Activated T-helper 1 cell treated with anti-CD3 and anti-CD28 coated beads, Interleukin-12 subunit alpha, Interleukin-12 subunit beta, Interleukin-2, Interleukin-4 antibody, amounts not matched to agents 30 ng/mL and 10 ng/mL and 1 ng/mL, durations not matched to agents 14 hours and 24 hours and 36 hours (primary cell): ENCODE measurements at regions of chr6 and their contacts with region 1.

Region 1: GRCh38 chr6:7107578-7108195 is at the start of gene RREB1:
- DNase-seq: peak; percentile 34
- H3K4me3 Mint-ChIP-seq: peak within 1 kb of the TSS; percentile 96
- H3K27ac Mint-ChIP-seq: peak within 1 kb of the TSS; percentile 92
- H3K4me1 Mint-ChIP-seq: peaks cover 41% of the 10 kb centered on the region
- H3K27me3 Mint-ChIP-seq: peaks cover 21% of the 10 kb centered on the region
- total RNA-seq, gene RREB1: 12.3 and 12.7 TPM in 2 replicates

Region 2: GRCh38 chr6:6749702-6750491 is 357.8 kb before region 1 on chr6:
- intact Hi-C with region 1: loop called (anchors 2 kb)
- DNase-seq: peak; percentile 42
- H3K4me3 Mint-ChIP-seq: peak overlapping the region; percentile 67
- H3K27ac Mint-ChIP-seq: peak overlapping the region; percentile 61
- H3K4me1 Mint-ChIP-seq: peaks cover 30% of the 10 kb centered on the region
- H3K27me3 Mint-ChIP-seq: peaks cover 13% of the 10 kb centered on the region

Region 3: DNA sequence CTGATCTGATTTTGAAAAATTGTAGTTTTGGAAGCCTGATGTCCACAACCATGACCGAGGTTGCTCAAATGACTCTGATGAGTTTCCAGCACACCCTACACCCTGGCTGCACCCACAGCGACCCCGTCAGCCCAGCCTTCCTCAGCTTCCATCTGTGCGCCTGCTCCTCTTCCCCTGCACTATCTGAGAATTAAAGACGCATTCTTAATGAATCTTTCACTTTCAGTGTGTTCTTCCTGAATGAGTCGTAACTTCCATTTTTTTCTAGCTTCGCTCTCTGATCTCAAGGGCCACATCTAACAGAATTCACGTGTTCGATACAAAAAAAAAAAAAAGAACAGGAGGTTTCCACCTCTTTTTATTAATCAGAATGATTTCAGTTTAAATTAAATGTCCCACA is 21.2 kb before region 1 on chr6:
- intact Hi-C with region 1: loop called (anchors 1 kb)
- DNase-seq: no peak
- H3K4me3 Mint-ChIP-seq: peak overlapping the region; percentile 63
- H3K27ac Mint-ChIP-seq: no peak overlapping the region
- H3K4me1 Mint-ChIP-seq: peaks cover 27% of the 10 kb centered on the region
- H3K27me3 Mint-ChIP-seq: peaks cover 81% of the 10 kb centered on the region

Region 4: DNA sequence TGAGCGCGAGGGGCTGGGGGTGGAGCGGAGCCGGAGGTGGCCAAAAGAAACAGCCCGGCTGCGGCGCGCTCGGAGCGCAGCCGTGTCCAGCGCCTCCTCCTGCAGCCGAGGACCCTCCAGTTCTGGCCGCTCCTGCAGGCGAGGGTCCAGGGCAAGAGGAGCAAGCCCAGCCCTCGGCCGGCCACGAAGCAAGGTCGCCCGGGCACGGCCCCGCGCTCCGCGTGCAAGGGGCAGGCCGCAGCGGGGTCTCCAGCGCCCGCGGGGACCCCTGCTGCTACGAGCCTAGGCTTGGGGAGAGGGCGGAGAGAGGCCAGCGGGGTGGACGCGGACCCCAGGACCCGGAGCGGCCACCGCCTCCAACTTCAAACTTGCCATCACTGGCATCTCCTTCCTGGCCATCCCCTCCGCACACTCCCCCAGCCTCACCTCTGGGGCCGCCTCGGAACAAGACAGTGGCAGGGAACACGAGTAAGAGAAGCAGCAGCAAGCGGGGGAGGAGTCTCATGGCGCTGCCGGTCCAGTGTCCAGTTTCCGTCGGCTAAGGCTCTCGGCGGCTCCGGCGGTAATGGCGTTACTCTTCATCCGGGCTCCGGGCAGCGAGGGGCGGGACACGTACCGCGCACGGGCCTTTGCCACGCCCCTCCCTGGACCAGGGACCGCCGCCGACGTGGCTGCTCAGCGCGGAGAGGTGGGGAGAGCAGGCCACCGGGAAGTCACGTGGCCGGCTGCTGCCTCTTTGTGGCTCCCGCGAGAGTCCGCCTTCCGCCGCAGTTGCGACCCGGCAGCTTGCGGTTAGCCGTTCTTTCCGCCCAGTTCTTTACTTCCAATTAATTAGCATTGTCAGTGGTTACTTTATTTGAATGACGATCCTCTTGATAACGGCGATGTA is 205.2 kb after region 1 on chr6 and contains the start of gene SSR1:
- intact Hi-C with region 1: loop called (anchors 2 kb)
- DNase-seq: peak; percentile 95
- H3K4me3 Mint-ChIP-seq: peak within 1 kb of the TSS; percentile 98
- H3K27ac Mint-ChIP-seq: peak within 1 kb of the TSS; percentile 94
- H3K4me1 Mint-ChIP-seq: peaks cover 35% of the 10 kb centered on the region
- H3K27me3 Mint-ChIP-seq: no peaks in the 10 kb centered on the region
- total RNA-seq, gene SSR1: 160 and 168 TPM in 2 replicates

Region 5: DNA sequence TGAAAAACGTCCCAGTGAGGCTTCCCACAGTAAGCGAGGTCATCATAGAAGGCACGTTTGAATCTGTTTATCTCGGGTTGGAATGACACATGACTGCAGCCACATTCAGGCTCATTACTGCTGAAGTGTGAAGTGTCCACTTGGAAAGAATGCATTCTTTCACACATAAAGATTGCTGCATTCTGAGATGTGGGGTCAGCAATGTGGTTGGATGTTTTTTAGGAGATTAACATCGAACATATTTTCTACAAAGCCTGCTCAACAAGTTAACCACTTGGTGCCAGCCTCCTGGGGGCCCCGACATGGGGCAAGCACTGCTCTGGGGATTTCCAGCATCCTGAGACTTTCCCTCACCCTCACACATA is 698.1 kb after region 1 on chr6:
- intact Hi-C with region 1: no loop called
- DNase-seq: no peak
- H3K4me3 Mint-ChIP-seq: no peak overlapping the region
- H3K27ac Mint-ChIP-seq: no peak overlapping the region
- H3K4me1 Mint-ChIP-seq: no peaks in the 10 kb centered on the region
- H3K27me3 Mint-ChIP-seq: peaks cover 7% of the 10 kb centered on the region